Calu3 (cell line): ENCODE measurements at regions of chr18 and their contacts with region 1.

Region 1: GRCh38 chr18:48777026-48777743 is 173.6 kb downstream of the SMAD7 start:
- DNase-seq: peak; percentile 82
- H3K4me3 Mint-ChIP-seq: no peak overlapping the region
- H3K27ac Mint-ChIP-seq: no peak overlapping the region
- H3K4me1 Mint-ChIP-seq: no peaks in the 10 kb centered on the region
- H3K27me3 Mint-ChIP-seq: no peaks in the 10 kb centered on the region
- CTCF ChIP-seq: peak; percentile 94

Region 2: DNA sequence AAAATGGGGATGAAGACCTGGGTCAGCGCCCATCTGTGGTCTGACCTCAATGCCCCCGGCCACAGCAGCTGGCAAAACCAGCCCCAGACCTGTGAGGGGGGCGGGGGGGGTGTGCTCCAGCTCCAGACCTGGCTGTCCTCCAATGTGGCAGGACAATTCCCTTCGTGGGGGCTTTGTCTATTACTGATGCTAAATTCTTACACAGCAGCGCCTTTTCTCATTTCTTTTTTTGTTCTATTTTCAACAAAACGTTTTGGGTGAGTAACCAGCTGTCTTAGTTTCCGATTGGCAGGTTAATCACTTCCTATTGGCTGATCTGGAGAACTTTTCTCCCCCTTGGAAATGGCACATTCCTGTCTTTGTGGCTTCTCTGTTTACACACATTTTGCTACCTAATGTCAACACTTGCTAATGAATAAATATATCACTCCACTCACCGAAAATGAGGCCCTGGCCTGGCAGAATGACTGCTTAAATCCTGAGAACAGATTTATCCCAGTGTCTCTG is 169.2 kb after region 1 on chr18:
- CTCF ChIA-PET with region 1: no interaction called
- intact Hi-C with region 1: loop called (anchors 2 kb)
- DNase-seq: peak; percentile 43
- H3K4me3 Mint-ChIP-seq: peak overlapping the region; percentile 77
- H3K27ac Mint-ChIP-seq: peak overlapping the region; percentile 77
- H3K4me1 Mint-ChIP-seq: peaks cover 67% of the 10 kb centered on the region
- H3K27me3 Mint-ChIP-seq: no peaks in the 10 kb centered on the region
- CTCF ChIP-seq: no peak

Region 3: DNA sequence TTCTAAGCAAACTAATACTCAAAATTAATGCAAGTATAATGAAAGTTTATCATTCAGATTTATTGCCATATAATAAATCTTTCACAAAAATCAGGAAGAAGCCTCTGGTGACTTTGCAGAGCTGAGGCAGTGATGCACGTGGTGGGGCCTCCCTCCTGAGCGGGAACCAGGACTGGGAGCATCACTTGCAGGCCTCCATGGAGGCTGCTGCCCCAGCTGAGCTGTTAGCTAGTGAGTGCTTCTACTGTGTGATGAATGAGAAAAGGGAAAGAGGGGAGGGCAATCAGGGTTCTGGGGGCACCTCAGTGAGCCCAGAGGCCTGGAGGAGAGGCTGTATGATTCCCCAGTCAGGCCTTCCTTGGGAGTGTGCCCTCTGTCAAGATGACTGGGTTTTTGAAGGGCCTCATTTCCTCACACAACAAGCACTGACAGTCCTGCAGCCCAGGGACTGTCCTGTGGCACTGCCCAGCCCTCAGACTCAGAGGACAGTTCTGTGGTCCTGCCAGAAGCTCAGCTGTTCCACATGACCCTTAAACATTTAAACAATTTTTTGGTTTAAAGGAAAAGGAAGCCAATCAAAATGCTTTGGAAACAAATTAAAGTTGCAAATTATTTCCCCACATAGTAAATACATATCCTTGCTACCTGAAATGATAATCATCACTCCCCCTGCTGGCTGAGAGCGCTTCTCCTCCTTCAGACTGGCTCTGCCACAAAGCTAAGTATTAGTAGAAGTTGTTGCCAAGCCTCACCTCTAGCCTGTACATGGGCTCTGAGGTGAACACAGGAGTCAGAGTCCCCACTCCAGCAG is 264.5 kb after region 1 on chr18:
- CTCF ChIA-PET with region 1: interaction called, 3 read pairs
- intact Hi-C with region 1: loop called (anchors 5 kb)
- DNase-seq: peak; percentile 70
- H3K4me3 Mint-ChIP-seq: no peak overlapping the region
- H3K27ac Mint-ChIP-seq: no peak overlapping the region
- H3K4me1 Mint-ChIP-seq: no peaks in the 10 kb centered on the region
- H3K27me3 Mint-ChIP-seq: no peaks in the 10 kb centered on the region
- CTCF ChIP-seq: peak; percentile 71